HepG2 (cell line): ENCODE measurements at regions of chr7 and their contacts with region 1.

Region 1: GRCh38 chr7:138738551-138739335 is 37.6 kb upstream of the SVOPL start:
- DNase-seq: peak; percentile 81
- ATAC-seq: peak; percentile 96
- H3K4me3 ChIP-seq: peak overlapping the region in 1 of 3 experiments; percentile 7; a peak in 1 of 6 replicates
- H3K27ac ChIP-seq: no peak overlapping the region
- H3K4me1 ChIP-seq: peaks cover 20% of the 10 kb centered on the region
- H3K27me3 ChIP-seq: no peaks in the 10 kb centered on the region
- CTCF ChIP-seq: peak; percentile 95
- EP300 ChIP-seq: no peak
- POLR2A ChIP-seq: no peak
- RAD21 ChIP-seq: peak; percentile 89

Region 2: DNA sequence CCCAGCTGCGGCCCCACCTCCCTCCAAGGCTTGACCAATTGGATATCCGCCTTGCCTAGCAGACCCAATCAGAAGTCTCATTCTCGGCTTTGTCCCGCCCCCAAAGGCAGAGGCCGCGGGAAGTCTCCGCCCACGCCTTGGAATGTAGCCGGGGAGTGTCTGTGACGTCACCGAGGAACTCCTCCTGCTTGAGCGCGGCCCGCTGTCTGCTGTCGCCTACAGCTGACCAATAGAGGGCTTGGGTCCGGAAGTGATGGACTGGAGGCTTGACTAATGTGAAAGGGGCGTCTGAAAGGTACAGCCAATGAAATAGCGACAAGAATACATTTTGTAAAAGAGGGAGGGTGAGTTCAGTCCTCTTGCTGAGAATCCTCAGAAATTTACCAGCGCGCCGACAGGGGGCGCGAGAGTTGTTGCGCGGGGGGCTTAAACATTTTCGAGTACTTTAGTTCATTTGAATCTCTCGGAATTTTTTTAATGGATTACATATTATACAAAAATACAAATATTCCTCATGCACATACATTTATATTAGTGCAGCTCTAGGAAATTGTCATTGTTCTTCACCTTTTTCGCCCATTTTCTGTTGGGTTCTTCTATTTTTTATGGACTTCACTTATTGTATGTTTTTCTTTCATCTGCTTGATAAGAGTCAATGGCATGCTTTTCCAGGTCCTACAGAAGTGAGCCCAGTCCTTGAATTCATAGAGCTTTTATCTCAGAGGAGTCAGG is 736.5 kb before region 1 on chr7:
- CTCF ChIA-PET with region 1: no interaction called
- POLR2A ChIA-PET with region 1: no interaction called
- in situ Hi-C with region 1: loop called (anchors 25 kb)
- intact Hi-C with region 1: loop called (anchors 2 kb)
- DNase-seq: peak; percentile 99
- ATAC-seq: peak; percentile 94
- H3K4me3 ChIP-seq: peak overlapping the region; percentile 92 to 99 (median 98); a peak in 5 of 6 replicates
- H3K27ac ChIP-seq: peak overlapping the region; percentile 79
- H3K4me1 ChIP-seq: peaks cover 35% of the 10 kb centered on the region
- H3K27me3 ChIP-seq: no peaks in the 10 kb centered on the region; a peak in 1 of 5 replicates
- CTCF ChIP-seq: peak; percentile 73
- EP300 ChIP-seq: peak in 1 of 2 experiments; percentile 39; a peak in 2 of 4 replicates
- POLR2A ChIP-seq: no peak
- RAD21 ChIP-seq: peak; percentile 56; the same call in 1 of the 2 replicates

Region 3: GRCh38 chr7:138161600-138162081 is 577.1 kb before region 1 on chr7:
- CTCF ChIA-PET with region 1: interaction called, 5 read pairs
- POLR2A ChIA-PET with region 1: interaction called, 4 read pairs
- in situ Hi-C with region 1: no loop called
- intact Hi-C with region 1: loop called (anchors 1 kb)
- DNase-seq: peak; percentile 95
- ATAC-seq: peak; percentile 88
- H3K4me3 ChIP-seq: no peak overlapping the region; a peak in 1 of 6 replicates
- H3K27ac ChIP-seq: peak overlapping the region; percentile 21
- H3K4me1 ChIP-seq: peaks cover 59% of the 10 kb centered on the region
- H3K27me3 ChIP-seq: no peaks in the 10 kb centered on the region
- CTCF ChIP-seq: peak; percentile 94
- EP300 ChIP-seq: peak in 1 of 2 experiments; percentile 55; a peak in 2 of 4 replicates
- POLR2A ChIP-seq: no peak
- RAD21 ChIP-seq: peak; percentile 92

Region 4: DNA sequence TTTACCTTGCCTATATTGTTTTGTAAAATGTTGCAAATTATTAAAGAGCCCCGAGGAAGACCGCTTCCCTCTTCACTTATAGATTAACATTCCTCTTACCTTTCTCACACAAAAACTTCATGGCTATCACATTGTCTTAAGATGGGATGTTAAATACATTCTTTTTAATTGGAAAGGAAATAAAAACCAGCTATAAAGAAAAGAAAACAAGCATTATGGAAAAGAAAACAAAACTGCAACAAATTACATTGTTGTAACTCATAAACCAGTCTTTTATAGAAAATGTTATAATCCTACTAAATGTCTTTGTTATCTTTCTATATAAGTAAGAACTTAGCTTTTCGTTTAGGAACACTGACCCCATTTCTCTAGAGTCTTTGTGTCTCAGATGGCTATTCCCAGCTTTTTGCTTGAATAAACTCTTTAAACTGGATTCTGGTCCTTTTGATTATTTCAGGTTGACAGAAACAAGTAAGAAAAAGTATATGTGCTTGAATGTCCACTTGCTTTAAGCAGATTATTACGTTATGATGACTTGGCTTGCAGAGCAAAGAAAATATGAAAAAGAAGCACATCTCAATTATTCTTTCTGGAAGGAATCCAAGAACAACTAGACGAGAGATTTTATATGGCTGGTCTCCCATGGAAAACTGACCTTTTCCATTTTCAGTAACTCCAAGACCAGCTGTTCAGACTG is 534.3 kb before region 1 on chr7:
- CTCF ChIA-PET with region 1: no interaction called
- POLR2A ChIA-PET with region 1: no interaction called
- in situ Hi-C with region 1: no loop called
- intact Hi-C with region 1: no loop called
- DNase-seq: no peak
- ATAC-seq: no peak
- H3K4me3 ChIP-seq: no peak overlapping the region
- H3K27ac ChIP-seq: no peak overlapping the region
- H3K4me1 ChIP-seq: peaks cover 20% of the 10 kb centered on the region
- H3K27me3 ChIP-seq: no peaks in the 10 kb centered on the region
- CTCF ChIP-seq: no peak
- EP300 ChIP-seq: no peak
- POLR2A ChIP-seq: no peak
- RAD21 ChIP-seq: no peak

Region 5: GRCh38 chr7:138590154-138590553 is 148.6 kb before region 1 on chr7:
- CTCF ChIA-PET with region 1: no interaction called
- POLR2A ChIA-PET with region 1: no interaction called
- in situ Hi-C with region 1: loop called (anchors 10 kb)
- intact Hi-C with region 1: loop called (anchors 5 kb)
- DNase-seq: no peak
- ATAC-seq: no peak
- H3K4me3 ChIP-seq: no peak overlapping the region
- H3K27ac ChIP-seq: no peak overlapping the region
- H3K4me1 ChIP-seq: no peaks in the 10 kb centered on the region
- H3K27me3 ChIP-seq: no peaks in the 10 kb centered on the region
- CTCF ChIP-seq: no peak
- EP300 ChIP-seq: no peak
- POLR2A ChIP-seq: no peak; a peak in 1 of 4 replicates
- RAD21 ChIP-seq: no peak

Region 6: DNA sequence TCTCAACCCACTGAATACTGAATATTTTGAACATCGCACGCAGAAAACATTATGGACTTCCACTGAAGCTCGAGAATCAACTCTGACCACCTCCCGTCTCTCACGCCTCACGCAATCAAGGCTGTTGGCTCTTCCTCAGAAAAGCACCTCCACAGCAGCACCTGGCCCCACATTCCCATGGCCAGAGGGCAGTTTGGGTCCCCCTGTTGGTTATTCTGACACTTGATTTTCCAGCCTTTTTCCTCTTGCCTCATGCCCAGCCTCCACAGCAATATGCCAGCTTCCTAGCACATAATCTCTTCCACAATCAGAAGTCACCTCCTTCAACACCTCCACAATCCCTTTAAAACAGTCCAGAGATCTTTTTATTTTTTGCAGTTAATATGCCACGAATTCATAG is 93.5 kb before region 1 on chr7:
- CTCF ChIA-PET with region 1: interaction called, 5 read pairs
- POLR2A ChIA-PET with region 1: no interaction called
- in situ Hi-C with region 1: no loop called
- intact Hi-C with region 1: loop called (anchors 2 kb)
- DNase-seq: peak; percentile 15
- ATAC-seq: peak; percentile 83
- H3K4me3 ChIP-seq: no peak overlapping the region
- H3K27ac ChIP-seq: no peak overlapping the region
- H3K4me1 ChIP-seq: no peaks in the 10 kb centered on the region
- H3K27me3 ChIP-seq: no peaks in the 10 kb centered on the region
- CTCF ChIP-seq: peak; percentile 60
- EP300 ChIP-seq: no peak
- POLR2A ChIP-seq: no peak
- RAD21 ChIP-seq: no peak